ENCODE measurements at regions of chr9 and their contacts with region 1.

Region 1: GRCh38 chr9:100322954-100323536 is 29.7 kb downstream of the TEX10 start:
- DNase-seq: peak; percentile 67
- H3K4me3 Mint-ChIP-seq: no peak overlapping the region
- H3K27ac Mint-ChIP-seq: no peak overlapping the region
- H3K4me1 Mint-ChIP-seq: peaks cover 2% of the 10 kb centered on the region
- H3K27me3 Mint-ChIP-seq: no peaks in the 10 kb centered on the region

Region 2: GRCh38 chr9:99169982-99170761 is 1152.9 kb before region 1 on chr9:
- intact Hi-C with region 1: loop called (anchors 5 kb)
- DNase-seq: no peak
- H3K4me3 Mint-ChIP-seq: no peak overlapping the region
- H3K27ac Mint-ChIP-seq: no peak overlapping the region
- H3K4me1 Mint-ChIP-seq: peaks cover 29% of the 10 kb centered on the region
- H3K27me3 Mint-ChIP-seq: peaks cover 11% of the 10 kb centered on the region

Region 3: GRCh38 chr9:100084734-100085133 is 238.3 kb before region 1 on chr9:
- intact Hi-C with region 1: loop called (anchors 10 kb)
- DNase-seq: no peak
- H3K4me3 Mint-ChIP-seq: peak overlapping the region; percentile 27
- H3K27ac Mint-ChIP-seq: no peak overlapping the region
- H3K4me1 Mint-ChIP-seq: peaks cover 49% of the 10 kb centered on the region
- H3K27me3 Mint-ChIP-seq: no peaks in the 10 kb centered on the region